Activated naive CD4-positive, alpha-beta T cell treated with anti-CD3 and anti-CD28 coated beads, Interleukin-2, amount 10 ng/mL, durations not matched to agents 7 days and 5 days (primary cell): ENCODE measurements at regions of chr9 and their contacts with region 1.

Region 1: DNA sequence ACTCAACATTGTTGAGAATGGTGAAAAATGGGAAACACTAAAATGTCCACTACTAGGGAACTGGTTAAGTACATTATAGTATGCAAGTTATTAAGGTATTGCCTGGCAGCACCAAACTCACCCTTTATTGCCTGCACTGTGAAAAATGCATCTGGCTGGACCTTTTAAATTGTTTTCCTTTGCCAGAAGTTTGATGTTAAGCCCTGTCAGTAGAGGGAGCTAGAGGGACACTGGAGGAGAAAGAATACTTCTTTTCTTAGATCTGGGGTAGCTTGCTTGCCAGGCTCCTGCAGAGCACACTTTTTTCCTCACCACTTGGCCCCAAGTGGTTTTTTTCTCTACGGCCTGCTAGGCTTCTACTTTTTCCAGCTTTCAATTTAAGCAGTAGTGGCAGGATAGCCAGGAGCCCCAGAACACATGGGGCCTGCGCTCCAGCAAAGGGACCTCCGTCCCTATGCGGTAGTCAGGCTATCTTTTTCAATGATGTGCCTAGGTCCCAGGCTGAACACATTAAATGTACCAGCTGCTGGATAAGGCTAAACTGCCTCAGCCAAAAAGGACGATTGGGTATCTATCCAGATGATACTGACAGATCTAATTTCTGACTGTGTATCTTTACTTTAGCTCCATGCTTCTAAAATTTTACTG is 8.0 kb upstream of the HABP4 start:
- DNase-seq: peak; percentile 24
- H3K4me3 Mint-ChIP-seq: no peak overlapping the region
- H3K27ac Mint-ChIP-seq: no peak overlapping the region
- H3K4me1 Mint-ChIP-seq: no peaks in the 10 kb centered on the region
- H3K27me3 Mint-ChIP-seq: peaks cover 6% of the 10 kb centered on the region

Region 2: GRCh38 chr9:96566498-96567207 is 124.7 kb after region 1 on chr9:
- CTCF ChIA-PET with region 1: interaction called, 12 read pairs
- DNase-seq: peak; percentile 86
- H3K4me3 Mint-ChIP-seq: peak overlapping the region; percentile 73
- H3K27ac Mint-ChIP-seq: no peak overlapping the region
- H3K4me1 Mint-ChIP-seq: peaks cover 21% of the 10 kb centered on the region
- H3K27me3 Mint-ChIP-seq: peaks cover 18% of the 10 kb centered on the region